Activated naive CD4-positive, alpha-beta T cell treated with anti-CD3 and anti-CD28 coated beads for 36 hours (primary cell): ENCODE measurements at regions of chr1 and their contacts with region 1.

Region 1: DNA sequence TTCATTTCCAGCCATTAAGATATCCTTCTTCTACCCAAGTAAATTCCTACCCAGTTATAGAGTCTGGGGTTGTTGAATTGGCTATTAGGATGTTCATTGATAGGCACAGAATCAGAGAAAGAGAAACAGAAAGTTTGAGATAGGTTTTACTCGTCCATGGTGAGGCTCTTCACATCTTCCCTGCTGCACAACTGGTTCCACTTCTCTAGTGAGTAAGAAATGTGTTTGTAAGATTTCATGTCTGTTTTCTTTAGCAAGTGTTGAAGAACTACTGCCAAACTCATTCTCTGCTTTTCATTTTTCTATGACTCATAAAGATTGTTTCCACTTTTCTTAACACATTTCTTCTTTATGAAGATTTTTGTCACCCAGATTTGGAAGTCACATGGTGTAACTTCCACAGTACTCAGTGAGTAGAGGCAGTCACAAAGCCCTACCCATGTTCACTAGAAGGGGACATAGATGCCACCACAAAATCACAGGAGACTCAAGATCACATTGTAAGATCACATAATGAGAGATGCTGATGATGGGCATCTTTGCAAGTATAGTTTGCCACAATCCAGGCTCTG is 152.3 kb downstream of the SNX7 start:
- DNase-seq: peak; percentile 14
- H3K4me3 Mint-ChIP-seq: no peak overlapping the region
- H3K27ac Mint-ChIP-seq: peak overlapping the region; percentile 72
- H3K4me1 Mint-ChIP-seq: peaks cover 28% of the 10 kb centered on the region
- H3K27me3 Mint-ChIP-seq: no peaks in the 10 kb centered on the region

Region 2: DNA sequence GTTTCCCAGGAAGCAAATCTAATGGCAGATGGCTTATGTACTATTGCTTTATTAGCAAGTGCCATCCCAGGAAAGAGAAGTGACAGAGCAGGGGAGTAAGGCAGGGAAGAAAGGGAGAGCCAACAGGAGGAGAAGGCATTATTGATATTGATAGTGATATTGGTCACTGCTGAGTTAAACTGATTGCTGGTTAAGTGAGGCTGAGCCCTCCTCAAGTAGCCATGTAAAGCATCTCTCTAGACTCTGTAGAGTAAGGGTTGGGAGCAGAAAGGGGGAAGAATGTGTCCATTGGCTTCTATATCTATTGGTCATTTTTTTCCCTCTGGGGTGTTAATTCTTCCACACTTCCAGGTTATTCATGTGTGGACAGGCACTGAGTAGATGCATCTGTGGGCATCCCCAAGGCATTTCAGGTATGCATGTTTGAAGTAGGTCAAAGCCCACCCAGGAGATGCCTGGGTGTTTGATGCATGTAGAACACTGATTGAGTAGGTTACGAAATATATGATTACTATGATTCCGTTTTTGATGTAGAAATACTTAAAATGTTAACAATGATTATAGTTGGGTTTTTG is 602.5 kb before region 1 on chr1:
- CTCF ChIA-PET with region 1: no interaction called
- intact Hi-C with region 1: no loop called
- DNase-seq: no peak
- H3K4me3 Mint-ChIP-seq: no peak overlapping the region
- H3K27ac Mint-ChIP-seq: no peak overlapping the region
- H3K4me1 Mint-ChIP-seq: no peaks in the 10 kb centered on the region
- H3K27me3 Mint-ChIP-seq: no peaks in the 10 kb centered on the region

Region 3: GRCh38 chr1:98839840-98840239 is 26.0 kb after region 1 on chr1:
- CTCF ChIA-PET with region 1: no interaction called
- intact Hi-C with region 1: loop called (anchors 1 kb)
- DNase-seq: no peak
- H3K4me3 Mint-ChIP-seq: no peak overlapping the region
- H3K27ac Mint-ChIP-seq: no peak overlapping the region
- H3K4me1 Mint-ChIP-seq: peaks cover 23% of the 10 kb centered on the region
- H3K27me3 Mint-ChIP-seq: no peaks in the 10 kb centered on the region

Region 4: GRCh38 chr1:98849969-98850636 is 36.3 kb after region 1 on chr1:
- CTCF ChIA-PET with region 1: interaction called, 3 read pairs
- intact Hi-C with region 1: loop called (anchors 2 kb)
- DNase-seq: no peak
- H3K4me3 Mint-ChIP-seq: no peak overlapping the region
- H3K27ac Mint-ChIP-seq: no peak overlapping the region
- H3K4me1 Mint-ChIP-seq: peaks cover 18% of the 10 kb centered on the region
- H3K27me3 Mint-ChIP-seq: no peaks in the 10 kb centered on the region

Region 5: DNA sequence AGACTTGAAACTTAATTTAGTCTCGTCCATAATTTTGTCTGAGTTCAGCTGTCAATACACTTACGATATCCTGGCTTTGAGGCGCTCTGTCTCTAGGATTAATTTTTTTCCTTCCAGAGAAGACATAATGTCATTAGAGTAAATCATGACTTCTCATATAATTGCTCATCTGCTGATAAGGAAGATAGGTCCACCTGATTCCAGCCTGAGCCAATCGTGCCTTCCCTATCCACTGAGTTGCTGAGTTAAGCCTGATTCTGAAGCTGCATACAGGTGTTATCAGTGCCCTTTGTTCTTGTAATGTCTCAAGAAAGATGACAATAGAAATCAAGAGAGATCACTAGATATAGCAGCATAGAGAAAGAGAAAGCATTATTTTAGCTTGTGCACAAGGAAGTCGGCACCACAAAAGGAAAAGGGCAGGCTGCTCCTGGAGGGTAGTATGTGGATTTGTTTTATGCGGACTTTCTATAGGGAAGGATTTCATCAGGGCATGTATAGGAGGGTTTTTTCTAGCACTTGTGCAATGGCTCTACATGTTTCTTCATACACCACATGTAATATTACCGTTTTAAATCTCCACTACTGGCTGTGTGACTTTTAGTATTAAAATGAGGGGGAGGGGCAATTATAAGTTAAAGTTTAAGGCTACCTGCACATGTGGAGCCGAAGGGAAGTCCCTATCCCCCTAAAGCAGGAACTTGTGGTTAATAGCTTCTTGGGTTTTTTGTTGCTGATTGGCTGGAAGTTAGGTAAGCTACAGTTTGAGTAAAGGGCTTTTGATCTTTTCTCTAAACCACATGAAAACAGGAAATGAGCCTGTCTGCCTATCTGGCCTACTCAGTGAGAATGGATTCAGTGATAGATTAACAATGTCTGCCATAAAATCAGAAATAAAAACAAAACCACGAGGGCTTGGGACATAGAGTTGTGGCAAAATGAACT is 57.4 kb after region 1 on chr1:
- CTCF ChIA-PET with region 1: interaction called, 3 read pairs
- intact Hi-C with region 1: loop called (anchors 1 kb)
- DNase-seq: peak; percentile 60
- H3K4me3 Mint-ChIP-seq: peak overlapping the region; percentile 68
- H3K27ac Mint-ChIP-seq: peak overlapping the region; percentile 97
- H3K4me1 Mint-ChIP-seq: peaks cover 23% of the 10 kb centered on the region
- H3K27me3 Mint-ChIP-seq: no peaks in the 10 kb centered on the region

Region 6: DNA sequence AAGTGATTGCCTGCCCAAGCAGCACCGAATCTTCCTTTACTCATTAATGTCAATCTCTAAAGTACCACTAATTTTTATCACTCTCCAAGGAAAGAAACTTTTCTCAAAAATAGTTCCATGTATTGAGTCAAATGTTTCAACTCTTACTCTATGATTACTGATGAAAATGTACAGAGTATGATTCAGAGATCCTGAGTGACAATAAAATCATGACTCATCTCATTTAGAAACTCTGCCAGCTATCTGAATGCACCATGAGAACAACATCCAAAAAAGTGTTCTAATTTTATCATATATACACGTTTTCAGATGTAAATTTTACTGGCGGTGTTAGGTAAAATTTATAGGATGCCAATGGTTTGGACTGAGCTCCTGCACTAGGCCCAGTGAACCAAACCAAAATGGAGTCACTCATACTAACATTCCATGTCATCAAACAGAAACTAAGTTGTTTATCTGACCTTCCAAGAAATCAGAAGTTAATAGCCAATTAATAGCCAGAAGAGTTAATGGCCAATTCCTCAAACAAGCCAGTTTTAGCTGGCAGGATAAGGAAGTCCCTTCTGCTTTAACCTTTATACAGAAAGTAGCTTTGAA is 168.2 kb after region 1 on chr1:
- CTCF ChIA-PET with region 1: no interaction called
- intact Hi-C with region 1: loop called (anchors 5 kb)
- DNase-seq: no peak
- H3K4me3 Mint-ChIP-seq: no peak overlapping the region
- H3K27ac Mint-ChIP-seq: no peak overlapping the region
- H3K4me1 Mint-ChIP-seq: peaks cover 8% of the 10 kb centered on the region
- H3K27me3 Mint-ChIP-seq: no peaks in the 10 kb centered on the region